Ovary (tissue), 10 donors: ENCODE measurements at regions of chr14 and their contacts with region 1.

Region 1: GRCh38 chr14:95527387-95528002 is 7.4 kb upstream of the GLRX5 start:
- DNase-seq: peak in 3 of 5 donors; percentile 69 to 87 (median 70)
- H3K4me3 ChIP-seq: no peak overlapping the region
- H3K27ac ChIP-seq: peak overlapping the region in 1 of 2 donors; percentile 62
- H3K4me1 ChIP-seq: peaks cover 21% of the 10 kb centered on the region
- H3K27me3 ChIP-seq: no peaks in the 10 kb centered on the region
- CTCF ChIP-seq: peak; percentile 79 to 93 (median 88)
- EP300 ChIP-seq: no peak
- POLR2A ChIP-seq: no peak

Region 2: GRCh38 chr14:95442633-95443021 is 84.9 kb before region 1 on chr14:
- intact Hi-C with region 1: loop called (anchors 2 to 5 kb)
- DNase-seq: peak; percentile 83 to 89 (median 87)
- H3K4me3 ChIP-seq: no peak overlapping the region
- H3K27ac ChIP-seq: no peak overlapping the region
- H3K4me1 ChIP-seq: no peaks in the 10 kb centered on the region
- H3K27me3 ChIP-seq: no peaks in the 10 kb centered on the region
- CTCF ChIP-seq: peak; percentile 79 to 83 (median 81)
- EP300 ChIP-seq: no peak
- POLR2A ChIP-seq: no peak

Region 3: GRCh38 chr14:95472819-95473251 is 54.7 kb before region 1 on chr14:
- intact Hi-C with region 1: loop called in 1 of 4 experiments (anchors 10 kb)
- DNase-seq: no peak
- H3K4me3 ChIP-seq: no peak overlapping the region
- H3K27ac ChIP-seq: no peak overlapping the region
- H3K4me1 ChIP-seq: peaks cover 7% of the 10 kb centered on the region
- H3K27me3 ChIP-seq: no peaks in the 10 kb centered on the region
- CTCF ChIP-seq: no peak
- EP300 ChIP-seq: no peak
- POLR2A ChIP-seq: no peak